OCI-LY7 (cell line): ENCODE measurements at regions of chr9 and their contacts with region 1.

Region 1: GRCh38 chr9:127734747-127735529 is at the start of gene TOR2A:
- DNase-seq: peak; percentile 97
- H3K4me3 ChIP-seq: peak within 1 kb of the TSS; percentile 75
- H3K27ac ChIP-seq: peak within 1 kb of the TSS; percentile 69
- H3K4me1 ChIP-seq: peaks cover 19% of the 10 kb centered on the region
- CTCF ChIP-seq: peak; percentile 93
- total RNA-seq, gene TOR2A: 8.9 and 13.9 TPM in 2 replicates

Region 2: GRCh38 chr9:127586537-127586936 is 148.4 kb before region 1 on chr9:
- CTCF ChIA-PET with region 1: interaction called, 6 read pairs
- POLR2A ChIA-PET with region 1: no interaction called
- intact Hi-C with region 1: loop called (anchors 1 kb)
- DNase-seq: peak; percentile 71
- H3K4me3 ChIP-seq: no peak overlapping the region
- H3K27ac ChIP-seq: no peak overlapping the region
- H3K4me1 ChIP-seq: no peaks in the 10 kb centered on the region
- CTCF ChIP-seq: peak; percentile 80

Region 3: GRCh38 chr9:127707726-127708147 is 27.2 kb before region 1 on chr9:
- CTCF ChIA-PET with region 1: no interaction called
- POLR2A ChIA-PET with region 1: no interaction called
- intact Hi-C with region 1: no loop called
- DNase-seq: peak; percentile 55
- H3K4me3 ChIP-seq: no peak overlapping the region
- H3K27ac ChIP-seq: no peak overlapping the region
- H3K4me1 ChIP-seq: peaks cover 18% of the 10 kb centered on the region
- CTCF ChIP-seq: peak; percentile 69

Region 4: DNA sequence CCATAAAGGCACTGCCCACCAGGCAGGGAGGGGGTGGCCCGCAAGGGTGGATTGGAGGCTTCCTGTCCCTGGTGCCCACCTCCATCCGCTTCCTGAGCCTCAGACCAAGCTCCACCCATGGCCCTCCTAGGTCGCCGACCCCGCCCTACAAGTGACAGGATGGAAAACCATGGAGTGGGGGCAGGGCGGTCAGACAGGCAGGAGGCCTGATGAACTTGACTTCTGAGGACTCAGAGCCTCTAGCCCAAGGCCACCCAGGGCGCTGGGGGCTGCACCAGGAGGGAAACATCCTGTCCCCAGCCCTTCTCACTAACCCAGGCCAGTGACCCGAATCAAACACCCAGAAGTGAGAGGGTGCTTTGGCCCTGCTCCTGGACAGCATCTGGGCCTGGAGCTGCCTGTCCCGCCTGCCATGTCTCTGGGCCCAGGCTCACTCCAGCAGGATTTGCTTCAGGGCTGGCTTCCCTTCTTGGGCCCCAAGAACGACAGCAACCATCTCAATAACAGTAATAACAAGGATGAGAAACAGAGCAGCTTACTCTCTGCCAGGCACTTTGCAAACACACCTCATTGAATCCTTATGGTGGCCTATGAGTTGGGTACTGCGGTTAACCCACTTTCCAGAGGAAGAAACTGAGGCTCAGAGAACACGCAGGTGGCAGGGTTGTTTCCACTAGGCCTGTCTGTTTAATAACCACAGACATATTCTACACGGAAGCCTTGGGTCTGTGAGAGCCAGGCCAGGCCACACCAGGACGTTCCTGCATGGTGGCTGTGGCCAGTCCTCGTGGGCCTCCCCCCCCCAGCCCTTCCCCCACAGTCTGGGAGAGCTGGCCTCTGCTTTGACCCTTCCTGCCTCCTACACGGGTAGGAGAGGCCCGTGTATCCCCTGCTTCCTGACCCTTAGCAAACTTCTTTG is 168.9 kb after region 1 on chr9:
- CTCF ChIA-PET with region 1: no interaction called
- POLR2A ChIA-PET with region 1: no interaction called
- intact Hi-C with region 1: no loop called
- DNase-seq: peak; percentile 91
- H3K4me3 ChIP-seq: peak overlapping the region; percentile 58
- H3K27ac ChIP-seq: peak overlapping the region; percentile 94
- H3K4me1 ChIP-seq: peaks cover 79% of the 10 kb centered on the region
- CTCF ChIP-seq: no peak